HCT116 (cell line): ENCODE measurements at regions of chr16 and their contacts with region 1.

Region 1: DNA sequence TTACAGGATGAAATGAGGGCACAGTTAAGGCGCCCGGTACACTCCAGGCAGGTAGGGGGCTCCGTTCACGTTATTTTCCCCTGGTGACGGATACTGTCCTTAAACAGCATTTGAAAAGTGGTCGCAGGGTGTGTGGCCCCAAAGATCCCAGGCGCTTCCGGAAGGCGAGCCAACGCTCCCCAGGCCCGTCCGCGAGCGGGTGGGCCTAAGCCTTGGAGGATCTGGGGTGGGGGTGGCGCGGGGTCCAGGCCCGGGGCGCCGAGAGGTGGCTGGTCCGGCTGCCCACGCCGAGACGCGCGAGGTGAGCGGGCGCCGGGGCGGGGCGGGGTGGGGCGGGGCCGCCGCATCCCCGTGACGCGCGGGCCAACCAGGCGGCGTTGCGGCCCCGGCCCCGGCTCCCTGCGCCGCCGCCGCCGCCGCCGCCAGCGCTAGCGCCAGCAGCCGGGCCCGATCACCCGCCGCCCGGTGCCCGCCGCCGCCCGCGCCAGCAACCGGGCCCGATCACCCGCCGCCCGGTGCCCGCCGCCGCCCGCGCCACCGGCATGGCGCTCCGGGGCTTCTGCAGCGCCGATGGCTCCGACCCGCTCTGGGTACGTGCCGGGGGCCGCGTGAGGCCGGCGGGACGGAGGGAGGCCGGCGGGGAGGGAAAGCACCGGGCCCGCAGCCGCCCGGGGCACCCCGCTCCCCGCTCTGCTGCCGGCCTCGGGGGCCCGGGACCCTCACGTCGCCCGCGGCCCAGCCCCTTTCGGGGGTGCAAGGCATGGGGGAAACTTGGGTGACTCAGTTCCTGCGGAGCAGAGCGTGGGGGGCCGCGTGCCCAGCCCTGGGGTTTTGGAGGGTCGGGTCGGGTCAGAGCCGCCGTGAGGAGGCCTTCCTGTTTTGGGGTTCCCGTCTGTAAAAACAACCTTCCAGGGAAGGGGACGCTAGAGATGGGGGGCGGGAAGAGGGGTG is at the start of gene ABCC1:
- DNase-seq: no peak
- ATAC-seq: peak; percentile 86
- H3K4me3 ChIP-seq: peak within 1 kb of the TSS; percentile 69 to 72
- H3K27ac ChIP-seq: peak within 1 kb of the TSS; percentile 85
- H3K4me1 ChIP-seq: peaks cover 33 to 51% of the 10 kb centered on the region in 2 experiments
- H3K27me3 ChIP-seq: no peaks in the 10 kb centered on the region
- CTCF ChIP-seq: no peak; a peak in 1 of 6 replicates
- POLR2A ChIP-seq: no peak
- RAD21 ChIP-seq: peak; percentile 46
- total RNA-seq, gene ABCC1: 61.9 TPM

Region 2: GRCh38 chr16:16021988-16022682 is 72.7 kb after region 1 on chr16:
- CTCF ChIA-PET with region 1: no interaction called
- POLR2A ChIA-PET with region 1: no interaction called
- RAD21 ChIA-PET with region 1: no interaction called
- intact Hi-C with region 1: loop called (anchors 2 kb)
- DNase-seq: peak; percentile 81
- ATAC-seq: peak; percentile 95
- H3K4me3 ChIP-seq: peak overlapping the region in 1 of 2 experiments; percentile 19; a peak in 3 of 4 replicates
- H3K27ac ChIP-seq: peak overlapping the region; percentile 75
- H3K4me1 ChIP-seq: peaks cover 48 to 80% of the 10 kb centered on the region in 2 experiments
- H3K27me3 ChIP-seq: no peaks in the 10 kb centered on the region
- CTCF ChIP-seq: no peak
- POLR2A ChIP-seq: no peak
- RAD21 ChIP-seq: 0 out of 2 replicates have a peak, but pooled peaks have one; percentile 49